ENCODE measurements at regions of chr16 and their contacts with region 1.

Region 1: GRCh38 chr16:20900299-20901067 is at the starts of genes DCUN1D3 and LYRM1:
- DNase-seq: peak; percentile 96 to 98 (median 97)
- ATAC-seq: peak; percentile 92 to 96 (median 93)
- H3K4me3 ChIP-seq: peak within 1 kb of the TSS; percentile 68 to 93 (median 80)
- H3K27ac ChIP-seq: peak within 1 kb of the TSS; percentile 95 to 99 (median 97)
- H3K4me1 ChIP-seq: peaks cover 17 to 70% (median 55%) of the 10 kb centered on the region in 12 donors
- H3K27me3 ChIP-seq: no peaks in the 10 kb centered on the region
- CTCF ChIP-seq: no peak
- POLR2A ChIP-seq: peak in 1 of 2 donors; percentile 93
- total RNA-seq, gene DCUN1D3: 8.3 to 21.4 (median 11.0) TPM
- total RNA-seq, gene LYRM1: 40.2 to 124 (median 54.6) TPM

Region 2: DNA sequence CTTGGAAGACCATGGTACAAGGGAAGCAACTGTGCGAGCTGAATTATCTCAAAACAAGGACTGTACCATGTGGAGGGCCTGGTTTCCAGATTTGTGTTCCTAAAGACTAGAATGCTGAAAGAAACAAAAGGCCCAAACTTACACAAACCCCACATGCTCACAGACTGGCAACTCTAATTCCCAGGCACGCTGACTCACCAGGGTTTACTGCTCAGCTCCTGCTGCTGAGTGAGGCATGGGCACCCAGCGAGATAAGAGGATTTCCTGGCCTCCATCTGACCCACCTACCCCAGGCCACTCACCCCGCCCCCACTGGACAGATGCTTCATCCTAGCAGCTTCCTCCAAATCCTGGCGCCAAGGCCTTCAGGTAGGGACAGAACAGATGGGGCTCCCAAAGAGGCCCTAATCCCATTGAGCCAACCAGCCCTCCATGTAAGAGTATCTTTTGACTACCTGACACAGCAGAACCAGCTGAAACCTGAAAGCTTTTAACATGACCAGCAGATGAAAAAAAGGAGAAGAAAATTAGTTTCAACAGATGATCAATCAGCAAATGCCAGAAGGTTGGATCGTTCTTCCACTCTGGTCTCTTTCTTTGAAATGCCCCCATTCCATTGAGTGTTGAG is 34.2 kb before region 1 on chr16:
- intact Hi-C with region 1: loop called in 6 of 10 experiments (anchors 5 kb)
- DNase-seq: peak in 4 of 5 donors; percentile 38 to 79 (median 65)
- ATAC-seq: peak in 3 of 4 donors; percentile 46 to 53 (median 47)
- H3K4me3 ChIP-seq: no peak overlapping the region
- H3K27ac ChIP-seq: peak overlapping the region; percentile 5 to 85 (median 51)
- H3K4me1 ChIP-seq: peaks cover 6 to 90% (median 65%) of the 10 kb centered on the region in 12 donors
- H3K27me3 ChIP-seq: no peaks in the 10 kb centered on the region
- CTCF ChIP-seq: no peak
- POLR2A ChIP-seq: no peak

Region 3: GRCh38 chr16:21001262-21001661 is 100.8 kb after region 1 on chr16:
- intact Hi-C with region 1: no loop called
- DNase-seq: no peak
- ATAC-seq: peak in 1 of 4 donors; percentile 46
- H3K4me3 ChIP-seq: no peak overlapping the region
- H3K27ac ChIP-seq: no peak overlapping the region
- H3K4me1 ChIP-seq: no peaks in the 10 kb centered on the region
- H3K27me3 ChIP-seq: no peaks in the 10 kb centered on the region
- CTCF ChIP-seq: peak in 10 of 12 donors; percentile 9 to 44 (median 28)
- POLR2A ChIP-seq: no peak